ENCODE measurements at regions of chr7 and their contacts with region 1.

Region 1: DNA sequence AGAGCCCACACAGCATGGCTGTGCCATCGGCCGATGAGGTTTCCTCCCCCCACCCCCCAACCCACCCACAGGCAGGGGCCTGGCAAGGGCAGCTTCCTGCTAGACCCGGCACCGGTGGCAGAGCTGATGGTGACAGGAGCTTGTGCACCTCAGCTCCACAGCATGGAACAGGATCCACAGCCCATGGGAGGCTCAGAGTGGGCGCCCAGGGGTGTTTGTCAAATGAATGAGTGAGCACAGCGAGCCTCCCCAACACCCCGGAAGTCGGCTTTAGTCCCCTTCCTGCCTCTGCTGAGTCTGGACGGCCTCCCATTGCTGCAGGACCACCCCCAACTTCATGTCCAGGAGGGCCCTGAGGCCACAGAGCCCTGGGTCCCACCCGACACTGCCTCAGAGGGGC is 68.9 kb downstream of the PDGFA start:
- DNase-seq: no peak
- ATAC-seq: peak in 2 of 4 experiments; percentile 28 to 44
- H3K4me3 ChIP-seq: peak overlapping the region in 1 of 2 donors; percentile 19
- H3K4me3 Mint-ChIP-seq: peak overlapping the region in 1 of 3 donors; percentile 77
- H3K27ac ChIP-seq: no peak overlapping the region
- H3K27ac Mint-ChIP-seq: no peak overlapping the region
- H3K4me1 ChIP-seq: peaks cover 7 to 23% of the 10 kb centered on the region in 2 experiments
- H3K4me1 Mint-ChIP-seq: peaks cover 9 to 16% (median 16%) of the 10 kb centered on the region in 3 donors
- H3K27me3 ChIP-seq: peaks cover 0 to 43% of the 10 kb centered on the region in 2 experiments
- H3K27me3 Mint-ChIP-seq: peaks cover 0 to 25% of the 10 kb centered on the region in 2 donors

Region 2: DNA sequence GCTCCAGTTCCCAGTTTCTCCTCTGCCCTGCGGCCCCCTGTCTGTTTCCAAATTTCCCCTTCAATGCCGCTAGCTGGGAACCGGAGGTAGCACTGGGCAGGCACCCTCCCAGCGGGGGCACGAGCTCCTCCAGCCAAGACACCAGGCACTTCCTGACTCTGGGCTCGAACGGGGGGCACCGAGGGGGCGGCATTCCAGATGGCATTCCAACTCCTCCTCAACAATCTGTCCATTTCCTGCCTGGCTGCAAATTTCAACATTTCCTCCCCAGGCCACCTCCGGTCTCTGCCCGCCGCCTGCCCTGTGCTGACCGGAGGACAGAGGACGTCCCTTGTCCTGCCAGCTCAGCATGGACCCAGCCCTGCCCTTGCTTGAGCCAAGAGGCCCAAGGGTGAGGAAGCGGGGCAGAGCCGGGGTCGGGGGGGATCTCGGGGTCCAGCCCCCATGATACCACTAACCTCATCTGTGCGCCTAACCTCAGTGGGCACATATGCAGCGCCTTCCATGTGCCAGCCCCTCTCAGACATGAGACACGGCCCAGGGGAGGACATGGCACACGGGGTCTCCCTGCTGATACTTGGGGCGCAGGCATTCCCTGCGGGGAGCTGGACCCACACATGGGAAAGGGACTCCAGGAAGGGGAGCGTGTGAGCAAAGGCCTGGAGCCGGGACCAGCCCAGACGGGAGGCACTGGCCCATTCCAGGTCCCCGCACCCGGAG is 10.9 kb after region 1 on chr7:
- CTCF ChIA-PET with region 1: no interaction called
- POLR2A ChIA-PET with region 1: no interaction called
- DNase-seq: no peak
- ATAC-seq: peak in 1 of 4 experiments; percentile 6
- H3K4me3 ChIP-seq: no peak overlapping the region
- H3K4me3 Mint-ChIP-seq: no peak overlapping the region
- H3K27ac ChIP-seq: no peak overlapping the region
- H3K27ac Mint-ChIP-seq: no peak overlapping the region
- H3K4me1 ChIP-seq: no peaks in the 10 kb centered on the region
- H3K4me1 Mint-ChIP-seq: no peaks in the 10 kb centered on the region
- H3K27me3 ChIP-seq: peaks cover 0 to 4% of the 10 kb centered on the region in 2 experiments
- H3K27me3 Mint-ChIP-seq: no peaks in the 10 kb centered on the region

Region 3: GRCh38 chr7:471866-472639 is 21.3 kb after region 1 on chr7:
- CTCF ChIA-PET with region 1: interaction called in 1 of 2 experiments, 3 read pairs
- POLR2A ChIA-PET with region 1: interaction called in 1 of 2 experiments, 19 read pairs
- DNase-seq: peak in 13 of 35 experiments; percentile 3 to 40 (median 12)
- ATAC-seq: peak in 2 of 4 experiments; percentile 59 to 72
- H3K4me3 ChIP-seq: no peak overlapping the region
- H3K4me3 Mint-ChIP-seq: peak overlapping the region in 1 of 3 donors; percentile 19
- H3K27ac ChIP-seq: no peak overlapping the region
- H3K27ac Mint-ChIP-seq: no peak overlapping the region
- H3K4me1 ChIP-seq: peaks cover 3 to 23% of the 10 kb centered on the region in 2 experiments
- H3K4me1 Mint-ChIP-seq: peaks cover 6 to 15% (median 6%) of the 10 kb centered on the region in 3 donors
- H3K27me3 ChIP-seq: peaks cover 0 to 20% of the 10 kb centered on the region in 2 experiments
- H3K27me3 Mint-ChIP-seq: peaks cover 0 to 5% of the 10 kb centered on the region in 2 donors

Measured in T-cell (primary cell).